Esophagus muscularis mucosa (tissue), 4 donors: ENCODE measurements at regions of chrX and their contacts with region 1.

Region 1: GRCh38 chrX:74535408-74536151 is 78.8 kb downstream of the RLIM start:
- DNase-seq: peak; percentile 93
- H3K4me3 ChIP-seq: peak overlapping the region; percentile 50 to 65 (median 58)
- H3K27ac ChIP-seq: peak overlapping the region; percentile 80 to 92 (median 88)
- H3K4me1 ChIP-seq: peaks cover 3 to 20% (median 18%) of the 10 kb centered on the region in 4 donors
- H3K27me3 ChIP-seq: no peaks in the 10 kb centered on the region
- CTCF ChIP-seq: peak; percentile 36 to 46 (median 44)
- EP300 ChIP-seq: no peak
- POLR2A ChIP-seq: no peak

Region 2: GRCh38 chrX:74421036-74421739 is 114.4 kb before region 1 on chrX and contains the start of gene SLC16A2:
- intact Hi-C with region 1: loop called (anchors 2 kb)
- DNase-seq: no peak
- H3K4me3 ChIP-seq: peak within 1 kb of the TSS; percentile 60 to 69 (median 60)
- H3K27ac ChIP-seq: peak within 1 kb of the TSS; percentile 89 to 93 (median 92)
- H3K4me1 ChIP-seq: peaks cover 5 to 31% (median 24%) of the 10 kb centered on the region in 4 donors
- H3K27me3 ChIP-seq: peaks cover 0 to 5% (median 0%) of the 10 kb centered on the region in 4 donors
- CTCF ChIP-seq: no peak
- EP300 ChIP-seq: no peak
- POLR2A ChIP-seq: no peak
- total RNA-seq, gene SLC16A2: 7.3 to 13.7 (median 9.6) TPM

Region 3: DNA sequence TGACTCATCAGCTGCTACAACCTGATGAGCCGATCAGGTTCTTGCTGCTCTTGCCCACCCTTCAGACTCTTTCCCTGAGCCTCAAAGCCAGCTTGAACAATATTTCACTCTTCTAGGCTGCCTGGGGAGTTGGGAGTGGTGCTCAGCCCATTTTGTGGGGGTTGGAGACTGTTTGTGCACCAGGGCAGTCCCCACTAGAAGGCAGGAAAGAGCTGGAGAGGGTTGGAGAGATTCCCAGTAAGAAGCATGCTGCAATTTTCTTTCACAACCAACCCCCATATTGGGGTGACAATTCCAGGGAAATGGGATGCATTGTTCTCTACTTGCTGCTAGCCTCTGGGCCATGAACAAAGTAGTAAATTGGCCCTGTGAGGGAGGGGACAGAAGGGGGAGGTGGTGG is 70.2 kb before region 1 on chrX:
- intact Hi-C with region 1: no loop called
- DNase-seq: no peak
- H3K4me3 ChIP-seq: no peak overlapping the region
- H3K27ac ChIP-seq: no peak overlapping the region
- H3K4me1 ChIP-seq: peaks cover 0 to 11% (median 4%) of the 10 kb centered on the region in 4 donors
- H3K27me3 ChIP-seq: no peaks in the 10 kb centered on the region
- CTCF ChIP-seq: no peak
- EP300 ChIP-seq: no peak
- POLR2A ChIP-seq: no peak